Activated CD8-positive, alpha-beta T cell treated with anti-CD3 and anti-CD28 coated beads for 36 hours (primary cell): ENCODE measurements at regions of chr14 and their contacts with region 1.

Region 1: GRCh38 chr14:98782062-98782461 is 489.9 kb downstream of the BCL11B start:
- DNase-seq: no peak
- ATAC-seq: no peak
- H3K4me3 Mint-ChIP-seq: no peak overlapping the region
- H3K27ac Mint-ChIP-seq: no peak overlapping the region
- H3K4me1 Mint-ChIP-seq: no peaks in the 10 kb centered on the region
- H3K27me3 Mint-ChIP-seq: no peaks in the 10 kb centered on the region
- CTCF ChIP-seq: no peak

Region 2: GRCh38 chr14:98714626-98715425 is 67.2 kb before region 1 on chr14:
- CTCF ChIA-PET with region 1: no interaction called
- POLR2A ChIA-PET with region 1: no interaction called
- intact Hi-C with region 1: loop called (anchors 5 kb)
- DNase-seq: no peak
- ATAC-seq: no peak
- H3K4me3 Mint-ChIP-seq: no peak overlapping the region
- H3K27ac Mint-ChIP-seq: no peak overlapping the region
- H3K4me1 Mint-ChIP-seq: peaks cover 15% of the 10 kb centered on the region
- H3K27me3 Mint-ChIP-seq: no peaks in the 10 kb centered on the region
- CTCF ChIP-seq: no peak